ENCODE measurements at regions of chr5 and their contacts with region 1.

Region 1: DNA sequence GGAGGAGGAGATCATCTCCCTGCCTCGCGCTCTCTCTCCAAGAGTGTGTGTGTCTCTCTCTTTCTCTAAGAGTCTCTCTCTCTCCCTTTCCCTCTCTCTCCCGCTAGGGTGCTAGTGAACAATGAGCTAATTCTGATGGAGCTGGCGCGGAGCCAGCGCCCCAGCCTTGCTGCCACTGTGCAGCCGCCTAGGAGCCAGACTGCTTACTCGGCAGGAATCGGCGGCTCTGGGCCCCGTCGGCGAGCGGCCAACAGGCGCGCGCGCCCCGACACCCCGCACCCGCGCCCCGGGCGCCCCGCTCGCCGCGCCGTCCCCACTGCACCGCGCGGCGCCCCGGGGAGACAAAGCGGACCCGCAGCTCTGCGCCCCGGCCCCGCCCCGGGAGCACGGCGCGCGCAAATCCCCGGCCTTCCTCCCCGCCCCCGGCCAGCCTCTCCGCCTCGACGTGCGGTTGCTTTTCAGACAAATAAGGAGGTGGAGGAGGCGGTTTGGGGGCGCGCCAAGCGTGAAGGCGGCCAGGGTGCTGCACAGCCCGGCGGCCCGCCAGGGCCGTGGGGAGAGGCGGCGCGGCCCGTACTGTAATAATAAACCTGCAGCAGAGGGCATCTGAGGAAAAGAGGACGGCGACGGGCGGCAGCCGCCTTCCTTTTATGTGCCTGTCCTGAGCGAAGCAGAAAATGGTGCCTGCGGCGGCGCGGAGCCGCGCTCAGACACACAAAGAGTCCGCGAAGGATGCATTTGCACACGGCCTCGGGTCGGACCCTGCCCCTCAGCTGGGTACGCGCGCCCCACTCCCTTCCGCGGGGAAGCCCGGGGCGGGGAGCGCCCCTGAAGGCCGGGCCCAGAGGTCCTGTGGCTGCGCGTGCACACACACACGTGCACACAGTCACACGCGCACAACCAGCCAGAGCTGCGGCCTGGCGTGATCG is 625 bp upstream of the NREP start:
- DNase-seq: peak; percentile 97
- ATAC-seq: peak; percentile 92
- H3K4me3 ChIP-seq: peak overlapping the region; percentile 62 to 82
- H3K27ac ChIP-seq: peak overlapping the region; percentile 74 to 78
- H3K4me1 ChIP-seq: no peaks in the 10 kb centered on the region
- H3K27me3 ChIP-seq: no peaks in the 10 kb centered on the region

Region 2: DNA sequence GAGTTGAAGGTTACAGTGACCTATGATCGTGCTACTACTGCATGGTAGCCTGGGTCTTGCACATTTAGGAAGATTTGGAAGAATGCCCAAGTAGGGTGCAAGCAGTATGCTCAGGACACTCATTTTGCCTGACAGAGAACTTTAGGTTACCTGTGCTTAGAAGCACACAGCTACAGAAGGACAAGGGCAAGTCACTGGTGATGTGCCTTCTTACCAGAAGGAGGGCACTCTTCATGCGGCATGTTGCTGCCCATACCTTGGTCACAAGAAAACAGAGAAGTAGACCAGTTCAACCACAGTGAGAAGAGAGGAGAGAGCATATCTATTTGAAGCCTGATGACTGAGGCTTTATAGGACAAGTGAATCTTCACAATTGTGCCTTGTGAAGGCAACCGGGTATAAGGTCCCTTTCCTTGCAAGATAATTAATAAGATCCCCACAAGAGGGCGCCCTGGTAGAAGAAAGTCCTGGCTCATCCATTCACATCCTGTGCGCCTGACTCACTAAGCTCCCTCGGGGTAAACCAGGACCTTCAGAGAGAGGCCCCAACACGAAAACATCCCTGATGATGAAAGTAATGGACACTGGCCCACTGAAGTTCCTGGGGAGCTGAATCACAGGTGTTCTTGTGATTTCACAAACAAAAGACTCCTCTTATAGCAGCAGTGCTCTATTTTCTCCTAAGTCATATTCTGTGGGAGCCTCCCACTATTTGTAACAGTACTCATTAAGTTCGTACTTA is 207.2 kb before region 1 on chr5:
- intact Hi-C with region 1: loop called in 1 of 2 experiments (anchors 5 kb)
- DNase-seq: peak; percentile 77 to 84
- ATAC-seq: peak; percentile 93
- H3K4me3 ChIP-seq: no peak overlapping the region
- H3K27ac ChIP-seq: no peak overlapping the region
- H3K4me1 ChIP-seq: no peaks in the 10 kb centered on the region
- H3K27me3 ChIP-seq: no peaks in the 10 kb centered on the region

Region 3: DNA sequence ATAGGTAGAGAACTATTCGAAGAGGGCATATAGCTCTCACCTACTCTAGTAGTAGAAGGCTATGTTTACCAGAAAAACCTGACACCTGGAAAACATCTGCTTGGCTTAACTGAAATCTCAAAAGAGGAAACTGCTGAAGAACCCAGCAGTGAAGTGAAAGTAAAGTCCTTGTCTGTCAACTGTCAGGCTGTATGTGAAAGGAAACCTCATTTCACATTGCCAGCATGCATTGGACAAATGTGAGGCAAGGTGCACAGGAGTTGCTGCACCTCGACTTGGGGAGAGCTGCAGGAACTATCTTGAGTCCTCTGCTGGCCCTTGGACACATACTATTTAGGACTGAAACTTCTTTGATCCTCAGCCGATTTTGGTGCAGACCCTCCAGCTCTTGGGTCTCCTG is 54.0 kb before region 1 on chr5:
- intact Hi-C with region 1: no loop called
- DNase-seq: no peak
- ATAC-seq: no peak
- H3K4me3 ChIP-seq: no peak overlapping the region
- H3K27ac ChIP-seq: no peak overlapping the region
- H3K4me1 ChIP-seq: no peaks in the 10 kb centered on the region
- H3K27me3 ChIP-seq: no peaks in the 10 kb centered on the region

Region 4: GRCh38 chr5:111848384-111848964 is 90.9 kb after region 1 on chr5:
- intact Hi-C with region 1: no loop called
- DNase-seq: no peak
- ATAC-seq: no peak
- H3K4me3 ChIP-seq: no peak overlapping the region
- H3K27ac ChIP-seq: no peak overlapping the region
- H3K4me1 ChIP-seq: peaks cover 0 to under 1% of the 10 kb centered on the region in 2 donors
- H3K27me3 ChIP-seq: no peaks in the 10 kb centered on the region

Region 5: DNA sequence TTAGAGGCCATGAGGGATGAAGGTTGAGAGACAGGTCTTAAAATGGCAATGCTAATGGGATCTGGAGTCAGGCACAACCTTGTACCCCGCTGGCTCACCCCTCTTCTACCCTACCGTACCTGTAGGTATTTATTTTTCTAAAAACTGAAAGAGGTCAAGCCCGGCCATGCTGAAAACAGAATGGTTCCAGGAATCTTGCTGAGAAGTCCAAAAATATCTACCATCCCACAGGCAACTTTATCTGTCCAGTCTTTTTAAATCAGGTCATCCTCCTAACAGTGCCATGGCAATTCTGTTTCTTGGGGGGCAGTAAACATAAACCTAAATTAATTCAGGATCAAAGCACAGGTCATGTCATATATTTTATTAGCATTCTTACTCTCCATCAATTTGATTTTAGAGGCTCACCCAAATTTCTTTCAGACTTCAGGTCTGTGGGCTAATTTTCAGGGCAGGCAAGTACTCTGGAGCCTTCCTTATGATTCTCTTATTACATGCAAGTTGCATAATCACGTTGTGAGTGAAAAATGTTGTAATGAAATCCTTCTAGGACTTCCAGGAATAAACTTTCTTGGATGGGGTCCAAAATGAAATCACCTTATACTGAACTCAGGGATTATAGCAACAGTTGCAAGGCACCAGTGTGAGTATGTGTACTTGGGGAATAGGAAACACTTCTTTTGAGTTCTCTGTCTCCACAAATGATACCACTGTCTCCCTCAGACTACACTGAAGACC is 102.1 kb after region 1 on chr5:
- intact Hi-C with region 1: loop called in 1 of 2 experiments (anchors 5 kb)
- DNase-seq: no peak
- ATAC-seq: peak; percentile 82
- H3K4me3 ChIP-seq: no peak overlapping the region
- H3K27ac ChIP-seq: no peak overlapping the region
- H3K4me1 ChIP-seq: peaks cover 0 to 6% of the 10 kb centered on the region in 2 donors
- H3K27me3 ChIP-seq: no peaks in the 10 kb centered on the region

Measured in aorta (tissue), 5 donors.